ENCODE measurements at regions of chr17 and their contacts with region 1.

Region 1: GRCh38 chr17:8118769-8119580 is 661 bp upstream of the ALOXE3 start:
- DNase-seq: peak; percentile 75
- H3K4me3 ChIP-seq: peak overlapping the region; percentile 54 to 61 (median 57)
- H3K27ac ChIP-seq: peak overlapping the region; percentile 95
- H3K4me1 ChIP-seq: peaks cover 29% of the 10 kb centered on the region
- H3K27me3 ChIP-seq: no peaks in the 10 kb centered on the region
- CTCF ChIP-seq: peak; percentile 61 to 85

Region 2: GRCh38 chr17:7844292-7845154 is 274.5 kb before region 1 on chr17:
- CTCF ChIA-PET with region 1: no interaction called
- dilution Hi-C with region 1: no loop called
- in situ Hi-C with region 1: no loop called
- intact Hi-C with region 1: loop called (anchors 5 kb)
- DNase-seq: peak; percentile 94
- H3K4me3 ChIP-seq: peak overlapping the region; percentile 60 to 75 (median 71)
- H3K27ac ChIP-seq: peak overlapping the region; percentile 96
- H3K4me1 ChIP-seq: peaks cover 26% of the 10 kb centered on the region
- H3K27me3 ChIP-seq: no peaks in the 10 kb centered on the region
- CTCF ChIP-seq: no peak

Region 3: DNA sequence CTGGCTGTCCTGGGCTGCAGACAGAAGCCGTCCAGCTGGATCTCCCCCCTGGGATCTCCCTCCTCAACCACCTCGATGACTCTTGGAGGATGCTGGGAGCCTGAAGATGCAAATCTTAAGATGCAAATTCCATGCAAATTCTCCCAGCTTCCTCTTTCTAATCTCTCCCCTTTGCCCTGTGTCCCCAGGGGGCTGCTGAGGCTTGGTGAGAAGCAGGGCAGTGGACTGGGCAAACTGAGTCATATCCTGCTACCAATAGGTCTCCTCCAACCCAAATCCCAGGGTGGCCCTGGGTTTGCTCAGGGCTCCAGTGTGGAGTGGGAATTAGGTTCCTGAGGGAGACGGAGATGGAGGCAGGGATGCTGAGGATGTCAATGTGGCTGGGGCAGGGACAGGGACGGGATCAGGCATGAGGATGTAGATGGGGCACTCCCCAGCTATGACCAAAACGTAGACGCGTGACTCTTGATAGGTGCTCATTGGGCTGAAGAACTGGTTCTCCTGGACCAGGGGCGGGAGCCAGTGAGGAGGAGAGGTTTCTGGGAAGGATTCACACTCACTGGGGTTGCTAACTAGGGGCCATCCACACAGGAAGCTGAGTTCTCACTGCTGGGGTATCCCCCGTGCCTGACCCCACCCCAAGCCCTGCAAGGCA is 27.8 kb before region 1 on chr17:
- CTCF ChIA-PET with region 1: interaction called, 3 read pairs
- dilution Hi-C with region 1: no loop called
- in situ Hi-C with region 1: no loop called
- intact Hi-C with region 1: loop called (anchors 1 kb)
- DNase-seq: no peak
- H3K4me3 ChIP-seq: no peak overlapping the region
- H3K27ac ChIP-seq: no peak overlapping the region
- H3K4me1 ChIP-seq: peaks cover 8% of the 10 kb centered on the region
- H3K27me3 ChIP-seq: no peaks in the 10 kb centered on the region
- CTCF ChIP-seq: no peak

Region 4: GRCh38 chr17:8173056-8173870 is 54.3 kb after region 1 on chr17:
- CTCF ChIA-PET with region 1: no interaction called
- dilution Hi-C with region 1: no loop called
- in situ Hi-C with region 1: no loop called
- intact Hi-C with region 1: loop called (anchors 1 kb)
- DNase-seq: peak; percentile 99
- H3K4me3 ChIP-seq: peak overlapping the region; percentile 38 to 53 (median 48)
- H3K27ac ChIP-seq: peak overlapping the region; percentile 100
- H3K4me1 ChIP-seq: peaks cover 25% of the 10 kb centered on the region
- H3K27me3 ChIP-seq: no peaks in the 10 kb centered on the region
- CTCF ChIP-seq: no peak

Region 5: DNA sequence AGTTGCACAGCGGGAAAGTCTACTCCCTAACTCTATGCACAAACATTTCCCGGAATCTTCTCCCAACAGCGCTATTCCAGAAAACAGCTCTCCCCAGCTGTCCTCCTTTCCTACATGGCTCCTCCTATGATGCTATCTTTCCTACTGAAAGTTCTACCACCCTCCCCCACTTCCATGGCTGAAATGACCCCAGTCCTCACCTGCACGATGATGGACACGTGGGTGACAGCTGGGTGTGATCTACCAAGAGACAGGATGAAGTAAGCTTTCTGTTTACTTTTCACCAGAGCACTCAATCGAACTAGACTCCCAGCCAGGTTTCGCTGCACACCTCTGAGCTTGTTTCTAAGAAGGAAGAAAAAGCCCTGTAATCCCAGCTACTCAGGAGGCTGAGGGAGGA is 118.2 kb after region 1 on chr17:
- CTCF ChIA-PET with region 1: no interaction called
- dilution Hi-C with region 1: loop called (anchors 5 kb)
- in situ Hi-C with region 1: no loop called
- intact Hi-C with region 1: no loop called
- DNase-seq: no peak
- H3K4me3 ChIP-seq: no peak overlapping the region
- H3K27ac ChIP-seq: no peak overlapping the region
- H3K4me1 ChIP-seq: no peaks in the 10 kb centered on the region
- H3K27me3 ChIP-seq: no peaks in the 10 kb centered on the region
- CTCF ChIP-seq: no peak

Region 6: GRCh38 chr17:8383143-8383822 is 264.3 kb after region 1 on chr17 and contains the start of gene RPL26:
- CTCF ChIA-PET with region 1: no interaction called
- dilution Hi-C with region 1: no loop called
- in situ Hi-C with region 1: no loop called
- intact Hi-C with region 1: loop called (anchors 2 kb)
- DNase-seq: peak; percentile 97
- H3K4me3 ChIP-seq: peak within 1 kb of the TSS; percentile 86 to 99 (median 91)
- H3K27ac ChIP-seq: peak within 1 kb of the TSS; percentile 84
- H3K4me1 ChIP-seq: peaks cover 34% of the 10 kb centered on the region
- H3K27me3 ChIP-seq: no peaks in the 10 kb centered on the region
- CTCF ChIP-seq: peak; percentile 78 to 86
- total RNA-seq, gene RPL26: 1,799 to 2,054 TPM